ENCODE measurements at regions of chr2 and their contacts with region 1.

Region 1: DNA sequence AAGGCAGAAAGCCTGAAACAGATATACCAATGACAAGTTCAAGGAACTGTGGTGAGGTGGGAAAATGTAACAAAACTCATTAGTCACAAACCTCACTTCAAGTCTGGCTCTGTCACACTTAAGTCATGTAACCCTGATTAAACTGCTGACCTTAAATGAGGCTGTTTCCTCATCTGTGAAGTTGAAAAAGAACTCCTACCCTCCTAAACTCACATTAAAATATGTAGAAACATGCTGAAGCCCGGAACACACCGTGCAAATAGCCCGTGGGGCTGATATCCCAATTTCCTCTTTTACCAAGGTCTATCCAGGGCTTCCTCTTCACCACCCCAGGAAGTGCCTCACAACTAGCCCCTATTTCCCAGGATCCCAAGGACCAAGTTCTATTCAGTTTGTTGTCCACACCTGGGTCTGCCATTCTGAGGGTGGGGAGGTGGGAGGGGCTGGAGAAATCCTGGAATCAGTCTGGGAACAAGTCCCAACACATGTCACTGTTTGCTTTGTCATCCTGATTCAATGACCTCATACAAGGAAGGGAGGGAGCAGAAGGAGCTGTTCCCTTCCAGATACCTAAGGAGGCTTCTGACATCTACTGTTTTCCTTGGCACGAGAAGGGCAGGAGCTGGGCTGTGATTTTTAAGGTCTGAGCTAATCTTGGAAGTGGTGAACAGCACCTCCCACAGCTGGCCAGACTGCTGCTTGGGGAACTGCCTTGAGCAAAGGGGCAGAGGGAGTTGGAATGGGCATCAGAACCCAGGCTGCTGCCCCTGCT is 42.3 kb downstream of the SLC4A1AP start:
- DNase-seq: peak; percentile 86 to 90
- H3K4me3 ChIP-seq: no peak overlapping the region
- H3K27ac ChIP-seq: peak overlapping the region; percentile 77 to 91 (median 90)
- H3K4me1 ChIP-seq: peaks cover 10 to 40% (median 24%) of the 10 kb centered on the region in 4 donors
- H3K27me3 ChIP-seq: no peaks in the 10 kb centered on the region
- CTCF ChIP-seq: no peak
- EP300 ChIP-seq: peak; percentile 85
- POLR2A ChIP-seq: no peak

Region 2: DNA sequence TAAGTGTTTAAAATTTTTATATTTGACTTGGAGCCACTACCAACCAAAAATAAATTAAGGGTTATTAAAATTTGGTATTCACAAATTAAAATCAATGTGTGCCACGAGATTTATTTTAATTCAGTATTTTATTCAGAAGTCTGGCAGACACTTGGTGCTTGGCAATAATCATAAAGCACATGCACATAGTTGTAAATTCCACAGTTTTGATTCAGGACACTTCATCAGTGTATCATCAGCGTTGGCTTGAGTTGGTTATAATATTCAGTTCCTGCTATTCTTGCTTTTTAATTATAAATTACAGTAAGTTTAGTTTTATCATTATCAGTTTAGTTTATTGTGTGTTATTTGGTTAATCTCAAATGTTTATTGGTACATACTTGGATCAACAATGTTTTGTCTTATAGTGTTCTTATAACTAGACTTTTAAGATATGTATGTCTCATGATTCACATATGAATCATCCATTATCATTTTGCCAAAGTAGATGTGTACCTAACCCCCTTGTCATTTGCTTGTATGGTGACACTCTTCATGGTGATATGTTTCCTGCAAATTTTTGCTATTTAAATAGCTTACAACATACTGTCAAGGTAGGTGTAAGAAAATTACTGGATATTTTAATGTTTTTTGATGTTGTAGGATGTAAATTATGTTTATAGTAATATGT is 422.4 kb after region 1 on chr2:
- intact Hi-C with region 1: no loop called
- DNase-seq: no peak
- H3K4me3 ChIP-seq: no peak overlapping the region
- H3K27ac ChIP-seq: no peak overlapping the region
- H3K4me1 ChIP-seq: peaks cover 0 to 1% (median under 1%) of the 10 kb centered on the region in 4 donors
- H3K27me3 ChIP-seq: no peaks in the 10 kb centered on the region
- CTCF ChIP-seq: no peak
- EP300 ChIP-seq: no peak
- POLR2A ChIP-seq: no peak

Region 3: DNA sequence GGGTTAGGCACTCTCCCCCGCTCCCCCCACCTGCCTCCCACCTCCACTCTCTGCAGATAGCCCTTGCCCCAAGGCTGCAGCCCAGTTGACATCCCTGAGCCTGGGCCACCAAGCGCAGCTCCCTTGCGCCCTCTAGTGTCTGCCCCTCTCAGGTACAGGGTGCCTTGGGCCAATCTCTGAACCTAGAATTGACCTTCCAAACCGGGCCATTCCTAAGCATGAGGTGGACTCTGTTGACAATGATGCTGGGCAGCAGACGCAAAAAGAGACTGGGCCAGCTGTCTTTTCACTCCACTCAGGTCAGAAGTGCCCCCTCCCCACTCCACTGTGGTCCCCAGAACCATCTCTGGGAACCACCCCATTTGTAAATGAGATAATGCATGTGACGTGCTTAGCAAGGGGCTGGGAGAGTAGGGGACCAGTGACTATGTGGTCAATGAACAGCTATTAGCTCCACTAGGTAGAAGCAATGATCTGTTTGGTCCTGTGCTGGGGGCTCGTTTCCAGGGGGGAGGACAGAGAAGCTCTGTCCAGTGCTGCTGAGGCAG is 746.6 kb after region 1 on chr2:
- intact Hi-C with region 1: loop called (anchors 5 kb)
- DNase-seq: peak; percentile 81 to 82
- H3K4me3 ChIP-seq: no peak overlapping the region
- H3K27ac ChIP-seq: no peak overlapping the region
- H3K4me1 ChIP-seq: peaks cover 0 to 20% (median 0%) of the 10 kb centered on the region in 4 donors
- H3K27me3 ChIP-seq: no peaks in the 10 kb centered on the region
- CTCF ChIP-seq: peak in 6 of 7 experiments; percentile 20 to 94 (median 90)
- EP300 ChIP-seq: no peak
- POLR2A ChIP-seq: no peak